ENCODE measurements at regions of chr11 and their contacts with region 1.

Region 1: GRCh38 chr11:1652771-1653540 is 23.4 kb downstream of the KRTAP5-5 start:
- DNase-seq: peak; percentile 74 to 91
- H3K4me3 ChIP-seq: no peak overlapping the region
- H3K4me3 Mint-ChIP-seq: no peak overlapping the region
- H3K27ac Mint-ChIP-seq: peak overlapping the region; percentile 42
- H3K4me1 ChIP-seq: peaks cover 37% of the 10 kb centered on the region
- H3K4me1 Mint-ChIP-seq: peaks cover 17% of the 10 kb centered on the region
- H3K27me3 ChIP-seq: no peaks in the 10 kb centered on the region
- H3K27me3 Mint-ChIP-seq: no peaks in the 10 kb centered on the region
- CTCF ChIP-seq: peak; percentile 93 to 97

Region 2: DNA sequence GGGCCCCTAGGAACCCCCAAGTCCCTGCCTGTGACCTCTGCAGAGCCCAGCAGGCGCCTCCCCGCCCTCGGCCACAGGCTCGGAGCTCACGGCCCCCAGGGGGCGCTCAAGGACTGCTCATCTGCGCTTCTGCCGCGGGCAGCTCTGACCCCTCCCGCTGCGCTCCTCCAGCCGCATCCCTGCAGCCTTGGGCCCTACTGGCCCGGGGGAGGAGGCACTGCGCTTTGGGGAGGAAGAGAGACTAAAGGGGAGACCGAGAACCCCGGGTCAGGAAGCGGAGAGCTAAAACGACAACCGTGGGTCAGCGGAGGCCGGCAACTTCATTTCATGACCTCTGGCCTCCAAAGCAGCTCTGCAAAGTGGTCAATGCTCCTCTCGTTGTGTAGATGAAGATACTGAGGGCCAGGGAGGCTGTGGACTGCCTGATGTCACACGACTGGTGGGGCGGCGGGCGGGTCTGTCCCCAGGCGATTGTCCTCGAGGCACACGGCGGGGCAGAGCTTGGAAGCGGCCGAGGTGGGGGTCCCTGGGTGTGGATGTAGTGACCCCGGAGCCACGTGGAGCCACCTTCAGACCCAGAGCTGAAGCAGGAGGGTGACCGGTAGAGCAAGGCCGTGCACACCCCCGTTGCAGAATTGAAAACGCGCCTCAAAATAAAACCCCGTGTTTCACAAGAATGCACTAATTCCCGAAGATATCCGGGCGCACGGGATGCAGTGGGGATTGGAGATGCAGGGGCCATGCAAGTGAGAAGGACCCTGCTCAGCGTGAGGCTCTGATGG is 41.3 kb after region 1 on chr11:
- CTCF ChIA-PET with region 1: interaction called, 111 read pairs
- POLR2A ChIA-PET with region 1: no interaction called
- intact Hi-C with region 1: loop called (anchors 1 kb)
- DNase-seq: peak; percentile 86 to 93
- H3K4me3 ChIP-seq: peak overlapping the region; percentile 49
- H3K4me3 Mint-ChIP-seq: peak overlapping the region; percentile 83
- H3K27ac Mint-ChIP-seq: peak overlapping the region; percentile 91
- H3K4me1 ChIP-seq: peaks cover 44% of the 10 kb centered on the region
- H3K4me1 Mint-ChIP-seq: peaks cover 34% of the 10 kb centered on the region
- H3K27me3 ChIP-seq: no peaks in the 10 kb centered on the region
- H3K27me3 Mint-ChIP-seq: no peaks in the 10 kb centered on the region
- CTCF ChIP-seq: peak; percentile 93 to 95

Region 3: GRCh38 chr11:1832211-1832919 is 179.4 kb after region 1 on chr11:
- CTCF ChIA-PET with region 1: interaction called, 67 read pairs
- POLR2A ChIA-PET with region 1: interaction called, 3 read pairs
- intact Hi-C with region 1: loop called (anchors 2 kb)
- DNase-seq: peak in 1 of 2 experiments; percentile 70
- H3K4me3 ChIP-seq: no peak overlapping the region
- H3K4me3 Mint-ChIP-seq: peak overlapping the region; percentile 33
- H3K27ac Mint-ChIP-seq: peak overlapping the region; percentile 98
- H3K4me1 ChIP-seq: peaks cover 78% of the 10 kb centered on the region
- H3K4me1 Mint-ChIP-seq: peaks cover 50% of the 10 kb centered on the region
- H3K27me3 ChIP-seq: no peaks in the 10 kb centered on the region
- H3K27me3 Mint-ChIP-seq: no peaks in the 10 kb centered on the region
- CTCF ChIP-seq: peak; percentile 80 to 95

Region 4: GRCh38 chr11:1882519-1883238 is 229.7 kb after region 1 on chr11:
- CTCF ChIA-PET with region 1: interaction called, 24 read pairs
- POLR2A ChIA-PET with region 1: no interaction called
- intact Hi-C with region 1: no loop called
- DNase-seq: peak; percentile 76 to 87
- H3K4me3 ChIP-seq: no peak overlapping the region
- H3K4me3 Mint-ChIP-seq: no peak overlapping the region
- H3K27ac Mint-ChIP-seq: no peak overlapping the region
- H3K4me1 ChIP-seq: peaks cover 8% of the 10 kb centered on the region
- H3K4me1 Mint-ChIP-seq: no peaks in the 10 kb centered on the region
- H3K27me3 ChIP-seq: no peaks in the 10 kb centered on the region
- H3K27me3 Mint-ChIP-seq: no peaks in the 10 kb centered on the region
- CTCF ChIP-seq: peak; percentile 89 to 95

Region 5: DNA sequence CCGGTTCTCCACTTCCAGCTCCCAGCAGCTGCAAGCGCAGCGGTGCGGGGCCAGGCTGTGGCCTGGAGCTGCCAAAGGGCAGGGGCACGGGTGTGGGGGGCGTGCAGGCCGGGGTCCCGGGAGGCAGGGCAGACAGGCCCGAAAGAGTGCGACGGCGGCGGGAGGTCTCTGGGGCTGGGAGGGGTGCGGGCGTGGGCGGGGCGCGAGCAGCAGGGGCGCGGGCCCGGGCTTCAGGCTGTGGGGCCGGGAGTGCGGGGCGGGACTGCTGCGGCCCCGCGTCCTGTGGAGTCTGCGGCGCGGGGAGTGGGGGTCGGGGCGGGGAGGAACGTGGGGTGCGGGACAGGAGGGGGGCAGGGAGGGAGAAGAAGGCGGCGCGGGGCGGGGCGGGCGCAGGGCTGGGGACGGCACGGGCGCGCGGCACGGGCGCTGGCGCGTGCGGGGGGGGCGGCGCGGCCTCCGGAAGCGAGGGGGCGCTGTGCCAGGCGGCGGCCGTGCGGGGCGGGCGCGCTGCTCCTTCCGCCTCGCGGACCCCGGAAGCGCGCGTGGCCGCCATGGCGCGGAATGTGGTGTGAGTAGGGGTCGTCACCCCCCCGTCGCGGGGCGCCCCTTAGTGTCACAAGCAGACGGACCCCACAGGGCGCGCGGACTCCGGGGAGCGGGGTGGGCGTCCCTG is 294.0 kb after region 1 on chr11 and contains the start of gene MRPL23:
- CTCF ChIA-PET with region 1: interaction called, 11 read pairs
- POLR2A ChIA-PET with region 1: no interaction called
- intact Hi-C with region 1: no loop called
- DNase-seq: no peak
- H3K4me3 ChIP-seq: no peak within 1 kb of the TSS
- H3K4me3 Mint-ChIP-seq: no peak within 1 kb of the TSS
- H3K27ac Mint-ChIP-seq: no peak within 1 kb of the TSS
- H3K4me1 ChIP-seq: no peaks in the 10 kb centered on the region
- H3K4me1 Mint-ChIP-seq: no peaks in the 10 kb centered on the region
- H3K27me3 ChIP-seq: no peaks in the 10 kb centered on the region
- H3K27me3 Mint-ChIP-seq: no peaks in the 10 kb centered on the region
- CTCF ChIP-seq: no peak
- total RNA-seq, gene MRPL23: 7.8 and 15.0 TPM in 2 replicates